Activated CD4-positive, alpha-beta memory T cell treated with anti-CD3 and anti-CD28 coated beads, Interleukin-2, amount 10 ng/mL, durations not matched to agents 7 days and 5 days (primary cell): ENCODE measurements at regions of chr1 and their contacts with region 1.

Region 1: DNA sequence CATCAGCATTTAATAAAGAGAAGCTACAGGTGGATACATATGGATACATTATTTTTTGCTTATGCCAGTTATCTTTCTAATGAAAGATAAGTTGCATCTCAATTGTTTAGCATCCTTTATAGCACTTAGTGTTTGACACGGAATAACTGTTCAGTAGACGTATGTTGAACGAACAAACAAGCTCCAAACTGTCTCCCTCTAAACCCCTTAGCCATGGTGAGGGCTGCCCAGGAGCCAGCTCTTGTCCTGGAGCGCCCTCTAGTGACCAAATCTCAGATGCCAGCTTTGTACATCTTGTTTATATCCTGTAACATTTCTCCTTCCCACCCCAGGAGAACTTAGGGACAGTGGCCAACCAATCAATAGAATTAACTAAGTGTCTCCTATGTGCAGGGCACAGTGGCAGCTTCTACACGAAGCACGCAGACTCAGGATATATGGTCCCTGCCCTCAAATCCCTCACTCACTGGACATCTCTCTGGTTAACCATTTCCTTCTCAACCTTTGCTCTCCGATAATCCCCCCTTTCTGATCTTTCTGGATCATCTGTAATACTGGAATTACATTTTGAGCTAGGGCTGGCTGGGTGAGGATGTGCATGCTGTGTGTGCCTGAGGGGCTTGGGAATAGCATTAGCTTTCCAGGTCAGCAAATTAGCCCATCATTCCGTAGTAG is 22.9 kb downstream of the KCNA10 start:
- DNase-seq: peak; percentile 82
- H3K4me3 Mint-ChIP-seq: no peak overlapping the region
- H3K27ac Mint-ChIP-seq: no peak overlapping the region
- H3K4me1 Mint-ChIP-seq: peaks cover 4% of the 10 kb centered on the region
- H3K27me3 Mint-ChIP-seq: peaks cover 3% of the 10 kb centered on the region

Region 2: GRCh38 chr1:110196917-110197765 is 298.9 kb before region 1 on chr1:
- CTCF ChIA-PET with region 1: interaction called, 43 read pairs
- POLR2A ChIA-PET with region 1: interaction called, 5 read pairs
- DNase-seq: peak; percentile 56
- H3K4me3 Mint-ChIP-seq: no peak overlapping the region
- H3K27ac Mint-ChIP-seq: no peak overlapping the region
- H3K4me1 Mint-ChIP-seq: no peaks in the 10 kb centered on the region
- H3K27me3 Mint-ChIP-seq: no peaks in the 10 kb centered on the region

Region 3: DNA sequence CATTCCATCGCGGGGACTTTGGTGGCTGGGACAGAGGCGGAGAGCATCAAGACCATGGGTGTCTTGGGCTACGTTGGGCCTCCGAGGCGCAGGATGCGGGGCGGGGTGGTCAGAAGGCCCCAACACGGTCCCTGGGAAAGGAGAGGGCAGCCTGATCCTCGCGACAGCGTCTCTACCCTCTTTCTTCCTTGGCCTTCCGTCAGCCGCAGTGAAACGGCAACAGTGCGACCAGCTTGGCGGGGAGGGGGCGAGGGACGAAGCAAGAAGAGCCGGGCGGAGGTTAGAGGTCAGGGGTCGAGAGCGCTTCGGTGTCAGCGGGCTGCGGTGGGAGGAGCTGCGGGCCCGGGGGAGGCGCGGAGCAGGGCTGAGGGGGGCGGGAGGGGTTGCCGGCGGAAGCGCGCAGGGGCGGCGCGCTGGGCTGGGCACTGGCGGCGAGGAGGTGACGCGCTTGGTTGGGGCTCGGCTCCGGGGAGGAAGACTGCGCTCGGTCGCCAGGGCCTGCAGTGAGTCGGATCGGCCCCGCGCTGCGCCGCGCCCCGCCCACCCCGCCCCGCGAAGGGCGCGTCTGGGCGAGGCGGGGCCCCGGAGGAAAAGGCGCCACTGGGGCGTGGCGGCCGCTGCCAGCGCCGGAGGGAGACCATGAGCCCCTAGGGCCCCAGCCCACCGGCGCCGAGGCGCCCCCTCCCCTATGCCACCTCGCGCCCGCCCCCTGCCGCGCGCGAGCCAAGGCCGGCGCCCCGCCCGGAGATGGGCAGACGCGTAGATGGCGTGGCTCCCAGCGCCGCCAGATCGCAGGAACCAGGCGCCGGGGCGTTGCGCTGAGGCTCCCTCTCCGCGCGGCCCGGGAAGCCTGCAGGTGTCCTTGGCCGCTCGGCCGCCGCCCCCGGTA is 286.1 kb before region 1 on chr1 and contains the start of gene KCNC4:
- CTCF ChIA-PET with region 1: interaction called, 48 read pairs
- POLR2A ChIA-PET with region 1: interaction called, 3 read pairs
- DNase-seq: peak; percentile 95
- H3K4me3 Mint-ChIP-seq: peak within 1 kb of the TSS; percentile 81
- H3K27ac Mint-ChIP-seq: peak within 1 kb of the TSS; percentile 88
- H3K4me1 Mint-ChIP-seq: peaks cover 46% of the 10 kb centered on the region
- H3K27me3 Mint-ChIP-seq: peaks cover 9% of the 10 kb centered on the region
- total RNA-seq, gene KCNC4: 6.8 to 8.1 TPM

Region 4: GRCh38 chr1:110420874-110421793 is 74.9 kb before region 1 on chr1:
- CTCF ChIA-PET with region 1: interaction called, 12 read pairs
- POLR2A ChIA-PET with region 1: no interaction called
- DNase-seq: peak; percentile 46
- H3K4me3 Mint-ChIP-seq: no peak overlapping the region
- H3K27ac Mint-ChIP-seq: no peak overlapping the region
- H3K4me1 Mint-ChIP-seq: peaks cover 28% of the 10 kb centered on the region
- H3K27me3 Mint-ChIP-seq: peaks cover 11% of the 10 kb centered on the region

Region 5: GRCh38 chr1:110477041-110477440 is 19.0 kb before region 1 on chr1:
- CTCF ChIA-PET with region 1: interaction called, 18 read pairs
- POLR2A ChIA-PET with region 1: no interaction called
- DNase-seq: no peak
- H3K4me3 Mint-ChIP-seq: no peak overlapping the region
- H3K27ac Mint-ChIP-seq: no peak overlapping the region
- H3K4me1 Mint-ChIP-seq: peaks cover 3% of the 10 kb centered on the region
- H3K27me3 Mint-ChIP-seq: peaks cover 9% of the 10 kb centered on the region

Region 6: GRCh38 chr1:110508038-110508940 is 12.2 kb after region 1 on chr1:
- CTCF ChIA-PET with region 1: interaction called, 31 read pairs
- POLR2A ChIA-PET with region 1: no interaction called
- DNase-seq: no peak
- H3K4me3 Mint-ChIP-seq: no peak overlapping the region
- H3K27ac Mint-ChIP-seq: no peak overlapping the region
- H3K4me1 Mint-ChIP-seq: no peaks in the 10 kb centered on the region
- H3K27me3 Mint-ChIP-seq: peaks cover 14% of the 10 kb centered on the region

Region 7: GRCh38 chr1:110548381-110548780 is 52.3 kb after region 1 on chr1:
- CTCF ChIA-PET with region 1: no interaction called
- POLR2A ChIA-PET with region 1: no interaction called
- DNase-seq: no peak
- H3K4me3 Mint-ChIP-seq: no peak overlapping the region
- H3K27ac Mint-ChIP-seq: no peak overlapping the region
- H3K4me1 Mint-ChIP-seq: no peaks in the 10 kb centered on the region
- H3K27me3 Mint-ChIP-seq: peaks cover 28% of the 10 kb centered on the region

Region 8: GRCh38 chr1:110766025-110766647 is 270.1 kb after region 1 on chr1:
- CTCF ChIA-PET with region 1: interaction called, 11 read pairs
- POLR2A ChIA-PET with region 1: no interaction called
- DNase-seq: peak; percentile 66
- H3K4me3 Mint-ChIP-seq: no peak overlapping the region
- H3K27ac Mint-ChIP-seq: no peak overlapping the region
- H3K4me1 Mint-ChIP-seq: peaks cover 9% of the 10 kb centered on the region
- H3K27me3 Mint-ChIP-seq: peaks cover 19% of the 10 kb centered on the region